ENCODE measurements at regions of chr10 and their contacts with region 1.

Region 1: GRCh38 chr10:22325272-22326144 is 4.6 kb downstream of the BMI1 start:
- DNase-seq: peak in 41 of 42 donors; percentile 48 to 85 (median 68)

Region 2: GRCh38 chr10:21525367-21526183 is 799.9 kb before region 1 on chr10 and contains the start of gene SKIDA1:
- intact Hi-C with region 1: loop called (anchors 10 kb)
- DNase-seq: peak; percentile 38 to 92 (median 82)

Region 3: GRCh38 chr10:22003079-22003913 is 322.2 kb before region 1 on chr10 and contains the start of gene DNAJC1:
- intact Hi-C with region 1: loop called (anchors 5 kb)
- DNase-seq: peak; percentile 97 to 99 (median 99)

Region 4: DNA sequence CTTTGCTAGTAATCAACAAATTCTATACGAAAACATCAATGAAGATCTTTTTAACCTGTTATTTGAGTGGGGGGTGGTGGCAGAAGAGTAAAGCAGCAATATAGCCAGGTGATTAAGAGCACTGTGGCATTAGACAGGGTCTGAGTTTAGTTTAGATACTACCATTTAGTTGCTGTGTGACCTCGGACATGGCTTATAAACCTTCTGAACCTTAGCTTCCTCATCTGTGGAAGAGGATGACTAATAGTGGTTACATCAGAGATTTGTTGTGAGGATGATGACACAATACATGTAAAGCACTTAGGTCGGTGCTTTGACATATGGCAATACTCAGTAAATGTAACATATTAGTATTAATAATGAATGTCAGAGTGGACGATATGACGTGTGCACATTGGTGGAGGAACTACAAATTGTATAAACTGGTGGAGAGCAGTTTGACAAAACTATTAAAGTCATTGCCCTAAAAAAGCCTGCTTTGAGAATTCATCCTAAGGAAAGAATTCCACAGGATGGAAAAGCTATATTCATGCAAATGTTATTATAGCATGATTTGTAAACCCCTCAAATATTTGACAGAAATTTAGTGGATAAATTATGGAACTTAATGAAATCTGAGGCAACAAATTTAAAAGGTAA is 44.0 kb after region 1 on chr10:
- intact Hi-C with region 1: no loop called
- DNase-seq: no peak

Region 5: DNA sequence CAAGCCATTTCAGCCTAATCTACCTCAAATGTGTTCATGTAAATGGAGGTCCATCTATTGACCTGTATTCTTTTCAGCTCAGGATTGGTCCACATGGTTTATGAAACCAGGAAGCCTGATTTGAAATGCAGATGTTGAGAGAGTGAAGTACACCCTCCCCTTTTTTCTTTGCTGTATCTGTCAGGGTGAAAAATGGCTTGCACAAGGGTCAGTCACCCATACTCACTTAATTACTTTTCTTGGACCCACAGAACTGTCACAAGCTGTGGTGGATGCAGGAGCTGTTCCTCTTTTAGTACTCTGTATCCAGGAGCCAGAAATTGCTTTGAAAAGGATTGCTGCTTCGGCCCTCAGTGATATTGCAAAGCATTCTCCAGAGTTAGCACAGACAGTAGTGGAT is 61.0 kb after region 1 on chr10:
- intact Hi-C with region 1: no loop called
- DNase-seq: no peak

Region 6: GRCh38 chr10:22570733-22571430 is 245.4 kb after region 1 on chr10:
- intact Hi-C with region 1: no loop called
- DNase-seq: no peak

Measured in head of caudate nucleus (tissue), 42 donors.